Mammary epithelial cell (primary cell): ENCODE measurements at regions of chr7 and their contacts with region 1.

Region 1: GRCh38 chr7:86407291-86407690 is 236.4 kb upstream of the GRM3 start:
- DNase-seq: no peak
- H3K4me3 ChIP-seq: no peak overlapping the region
- H3K27ac ChIP-seq: no peak overlapping the region
- H3K4me1 ChIP-seq: no peaks in the 10 kb centered on the region
- H3K27me3 ChIP-seq: no peaks in the 10 kb centered on the region
- CTCF ChIP-seq: no peak

Region 2: GRCh38 chr7:85972504-85973141 is 434.7 kb before region 1 on chr7:
- CTCF ChIA-PET with region 1: no interaction called
- dilution Hi-C with region 1: no loop called
- in situ Hi-C with region 1: no loop called
- intact Hi-C with region 1: no loop called
- DNase-seq: no peak
- H3K4me3 ChIP-seq: no peak overlapping the region
- H3K27ac ChIP-seq: no peak overlapping the region
- H3K4me1 ChIP-seq: no peaks in the 10 kb centered on the region
- H3K27me3 ChIP-seq: no peaks in the 10 kb centered on the region
- CTCF ChIP-seq: no peak

Region 3: DNA sequence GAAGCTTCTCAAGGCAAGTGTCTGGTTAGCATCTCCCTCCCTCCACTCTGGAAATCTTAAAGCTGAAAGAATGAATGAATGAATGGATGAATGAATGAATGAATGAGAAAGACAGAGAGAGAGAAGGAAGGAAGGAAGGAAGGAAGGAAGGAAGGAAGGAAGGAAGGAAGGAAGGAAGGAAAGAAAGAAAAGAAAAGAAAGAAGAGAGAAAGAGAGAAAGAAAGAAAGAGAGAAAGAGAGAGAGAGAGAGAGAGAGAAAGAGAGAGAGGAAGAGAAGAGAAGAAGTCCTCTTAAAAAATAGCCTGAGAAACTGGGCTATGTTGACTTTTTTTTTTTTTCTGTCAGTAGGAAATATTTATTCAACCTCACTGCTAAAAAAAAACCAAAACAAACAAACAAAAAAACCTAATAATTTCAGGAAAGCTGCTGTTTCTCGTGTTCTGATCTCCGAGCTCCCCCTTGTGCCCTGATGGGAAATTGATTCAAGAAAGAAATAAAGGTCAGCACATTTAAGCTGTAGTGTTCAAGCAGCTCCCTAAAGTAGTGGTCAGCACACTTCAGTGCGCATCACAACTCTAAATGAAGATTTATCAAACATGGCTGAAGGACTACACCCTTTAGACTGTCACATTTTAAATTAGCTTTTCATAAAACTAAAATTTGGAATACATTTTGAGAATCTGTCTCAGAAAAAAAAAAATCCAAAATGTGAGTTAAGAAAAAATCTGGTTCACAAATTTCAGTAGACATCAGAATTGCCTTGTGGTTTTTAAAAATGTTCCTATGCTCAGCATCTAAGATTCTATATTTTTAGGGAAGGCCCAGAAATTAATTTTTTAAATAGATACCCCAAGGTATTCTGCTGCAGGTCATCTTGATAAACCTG is 497.9 kb after region 1 on chr7:
- CTCF ChIA-PET with region 1: interaction called, 11 read pairs
- dilution Hi-C with region 1: no loop called
- in situ Hi-C with region 1: no loop called
- intact Hi-C with region 1: no loop called
- DNase-seq: peak; percentile 4
- H3K4me3 ChIP-seq: no peak overlapping the region
- H3K27ac ChIP-seq: no peak overlapping the region
- H3K4me1 ChIP-seq: no peaks in the 10 kb centered on the region
- H3K27me3 ChIP-seq: no peaks in the 10 kb centered on the region
- CTCF ChIP-seq: peak; percentile 60 to 62